K562 (cell line): ENCODE measurements at regions of chr17 and their contacts with region 1.

Region 1: GRCh38 chr17:75325827-75326225 is 36.6 kb upstream of the SLC25A19 start:
- DNase-seq: no peak
- ATAC-seq: no peak; the same call in 2 of the 3 replicates
- H3K4me3 ChIP-seq: no peak overlapping the region
- H3K27ac ChIP-seq: peak overlapping the region; percentile 65
- H3K4me1 ChIP-seq: peaks cover 15 to 20% of the 10 kb centered on the region in 2 experiments
- H3K27me3 ChIP-seq: no peaks in the 10 kb centered on the region
- CTCF ChIP-seq: no peak
- EP300 ChIP-seq: no peak
- POLR2A ChIP-seq: no peak
- RAD21 ChIP-seq: no peak

Region 2: DNA sequence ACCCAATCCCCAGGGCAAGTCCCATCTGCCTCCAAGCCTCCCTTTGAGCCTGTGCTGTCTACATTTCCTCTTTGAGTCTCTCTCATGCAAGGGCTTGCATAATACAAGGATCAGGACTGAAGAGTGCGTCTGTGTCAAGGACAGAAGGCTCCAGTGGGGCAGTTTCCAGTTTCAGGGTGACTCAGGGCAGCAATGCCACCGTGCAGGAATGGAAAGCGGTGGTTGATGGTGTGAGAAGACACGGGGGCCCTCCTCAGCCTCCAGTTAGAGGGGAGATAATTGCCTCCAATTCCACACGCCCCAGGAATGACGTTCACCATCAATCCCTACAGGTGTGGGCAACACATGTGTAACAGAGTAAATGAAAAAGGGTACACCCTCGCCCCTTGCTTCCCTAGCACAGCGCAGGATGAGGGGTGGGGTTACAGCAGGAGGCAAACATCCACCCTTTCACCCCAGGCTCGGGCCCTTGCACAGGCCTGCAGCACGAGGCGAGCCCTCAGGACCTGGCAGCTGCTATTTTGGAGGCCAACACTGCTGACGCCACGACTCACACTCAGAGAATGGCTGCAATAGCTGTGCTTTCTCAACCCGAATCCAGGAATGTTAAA is 11.8 kb before region 1 on chr17:
- CTCF ChIA-PET with region 1: no interaction called
- POLR2A ChIA-PET with region 1: interaction called, 15 read pairs
- in situ Hi-C with region 1: no loop called
- intact Hi-C with region 1: no loop called
- DNase-seq: no peak
- ATAC-seq: no peak
- H3K4me3 ChIP-seq: no peak overlapping the region
- H3K27ac ChIP-seq: no peak overlapping the region
- H3K4me1 ChIP-seq: peaks cover 0 to 19% of the 10 kb centered on the region in 2 experiments; a peak in 4 of 5 replicates
- H3K27me3 ChIP-seq: no peaks in the 10 kb centered on the region
- CTCF ChIP-seq: no peak
- EP300 ChIP-seq: no peak
- POLR2A ChIP-seq: no peak
- RAD21 ChIP-seq: no peak

Region 3: DNA sequence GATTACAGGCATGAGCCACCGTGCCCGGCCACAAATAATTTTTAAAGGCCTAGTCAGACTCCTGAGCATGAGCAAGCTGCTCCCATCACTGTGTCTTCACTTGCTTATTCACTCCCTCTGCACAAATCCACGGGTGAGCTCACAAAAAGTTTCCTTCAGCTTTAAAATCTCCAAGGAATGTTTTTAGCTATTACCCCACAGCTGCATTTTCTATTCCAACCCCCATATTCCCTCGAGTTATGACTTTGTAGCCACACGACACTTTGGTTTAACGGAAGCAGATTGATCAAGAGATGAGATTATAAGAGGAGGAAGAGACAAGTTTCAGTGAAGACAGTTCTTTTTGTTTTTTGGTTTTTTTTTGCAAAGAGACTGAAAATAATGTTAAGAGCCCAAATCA is 12.5 kb after region 1 on chr17:
- CTCF ChIA-PET with region 1: no interaction called
- POLR2A ChIA-PET with region 1: interaction called, 10 read pairs
- in situ Hi-C with region 1: no loop called
- intact Hi-C with region 1: no loop called
- DNase-seq: peak in 2 of 4 experiments; percentile 10 to 29
- ATAC-seq: 0 out of 3 replicates have a peak, but pooled peaks have one; percentile 17
- H3K4me3 ChIP-seq: no peak overlapping the region
- H3K27ac ChIP-seq: peak overlapping the region; percentile 76
- H3K4me1 ChIP-seq: peaks cover 22 to 39% of the 10 kb centered on the region in 2 experiments
- H3K27me3 ChIP-seq: no peaks in the 10 kb centered on the region
- CTCF ChIP-seq: no peak
- EP300 ChIP-seq: peak; percentile 46
- POLR2A ChIP-seq: no peak
- RAD21 ChIP-seq: no peak

Region 4: GRCh38 chr17:75459590-75460267 is 133.9 kb after region 1 on chr17:
- CTCF ChIA-PET with region 1: no interaction called
- POLR2A ChIA-PET with region 1: no interaction called
- in situ Hi-C with region 1: no loop called
- intact Hi-C with region 1: no loop called
- DNase-seq: no peak
- ATAC-seq: no peak
- H3K4me3 ChIP-seq: no peak overlapping the region
- H3K27ac ChIP-seq: no peak overlapping the region
- H3K4me1 ChIP-seq: peaks cover 16 to 17% of the 10 kb centered on the region in 2 experiments; a peak in 4 of 5 replicates
- H3K27me3 ChIP-seq: no peaks in the 10 kb centered on the region
- CTCF ChIP-seq: no peak
- EP300 ChIP-seq: no peak
- POLR2A ChIP-seq: no peak
- RAD21 ChIP-seq: no peak